Dorsolateral prefrontal cortex (tissue), 120 donors: ENCODE measurements at regions of chr2 and their contacts with region 1.

Region 1: DNA sequence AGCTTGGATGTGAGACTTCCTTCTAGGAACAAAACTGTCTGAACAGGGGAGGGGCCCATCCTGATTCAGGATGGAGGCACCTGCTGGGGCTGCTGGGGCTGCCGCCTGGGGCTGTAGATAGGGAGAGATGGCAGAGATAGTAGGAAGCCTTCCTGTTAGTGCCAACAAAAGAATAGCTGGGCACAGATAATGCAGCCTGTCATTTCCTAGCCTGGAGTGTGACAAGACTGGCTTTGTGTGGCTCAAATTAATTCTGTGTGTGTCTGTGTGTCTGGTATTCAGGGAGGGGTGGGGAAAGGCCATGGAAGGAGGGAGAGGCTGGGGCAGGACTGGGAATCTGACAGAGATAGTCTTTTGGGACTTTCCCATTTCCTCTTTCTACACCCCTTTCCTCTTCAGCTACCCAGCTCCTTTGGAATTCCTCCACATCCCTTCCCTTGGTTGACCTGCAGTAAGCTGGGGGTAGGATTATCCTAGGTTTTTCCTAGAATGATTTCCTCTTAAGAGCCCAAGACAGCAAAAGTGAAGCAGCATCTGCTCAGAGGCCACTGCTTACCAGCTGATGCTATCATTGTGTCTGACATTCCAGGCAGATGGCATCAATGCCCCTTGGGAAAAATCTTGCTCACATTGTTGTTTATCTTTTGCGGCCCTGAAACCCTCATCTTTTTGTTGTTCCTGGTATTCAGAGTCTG is 144.9 kb upstream of the LHCGR start:
- DNase-seq: peak in 6 of 10 donors; percentile 35 to 65 (median 46)
- H3K4me3 ChIP-seq: no peak overlapping the region
- H3K27ac ChIP-seq: peak overlapping the region in 47 of 59 donors; percentile 1 to 82 (median 58)
- H3K27me3 ChIP-seq: peaks cover 0 to 3% (median 0%) of the 10 kb centered on the region in 45 donors
- CTCF ChIP-seq: peak in 7 of 56 donors; percentile 9 to 27 (median 20)

Region 2: GRCh38 chr2:47386551-47386950 is 1513.9 kb before region 1 on chr2:
- intact Hi-C with region 1: no loop called
- DNase-seq: no peak
- H3K4me3 ChIP-seq: no peak overlapping the region
- H3K27ac ChIP-seq: no peak overlapping the region
- H3K27me3 ChIP-seq: no peaks in the 10 kb centered on the region
- CTCF ChIP-seq: no peak

Region 3: GRCh38 chr2:48940606-48941005 is 40.1 kb after region 1 on chr2:
- intact Hi-C with region 1: loop called in 1 of 2 experiments (anchors 5 kb)
- DNase-seq: no peak
- H3K4me3 ChIP-seq: no peak overlapping the region
- H3K27ac ChIP-seq: no peak overlapping the region
- H3K27me3 ChIP-seq: peaks cover 0 to 3% (median 0%) of the 10 kb centered on the region in 45 donors
- CTCF ChIP-seq: no peak